Gastrocnemius medialis (tissue), 4 donors: ENCODE measurements at regions of chr12 and their contacts with region 1.

Region 1: GRCh38 chr12:82326905-82327503 is 31.2 kb downstream of the CCDC59 start:
- DNase-seq: no peak
- ATAC-seq: no peak
- H3K4me3 ChIP-seq: no peak overlapping the region
- H3K27ac ChIP-seq: no peak overlapping the region
- H3K4me1 ChIP-seq: peaks cover 0 to 5% of the 10 kb centered on the region in 2 donors
- H3K27me3 ChIP-seq: no peaks in the 10 kb centered on the region
- CTCF ChIP-seq: peak in 2 of 5 experiments; percentile 16 to 19
- POLR2A ChIP-seq: no peak

Region 2: GRCh38 chr12:81644503-81644902 is 682.5 kb before region 1 on chr12:
- in situ Hi-C with region 1: loop called in 1 of 4 experiments (anchors 10 kb)
- intact Hi-C with region 1: no loop called
- DNase-seq: no peak
- ATAC-seq: no peak
- H3K4me3 ChIP-seq: no peak overlapping the region
- H3K27ac ChIP-seq: no peak overlapping the region
- H3K4me1 ChIP-seq: no peaks in the 10 kb centered on the region
- H3K27me3 ChIP-seq: no peaks in the 10 kb centered on the region
- CTCF ChIP-seq: peak in 3 of 5 experiments; percentile 12 to 35 (median 18)
- POLR2A ChIP-seq: no peak